HCT116 (cell line): ENCODE measurements at regions of chr17 and their contacts with region 1.

Region 1: DNA sequence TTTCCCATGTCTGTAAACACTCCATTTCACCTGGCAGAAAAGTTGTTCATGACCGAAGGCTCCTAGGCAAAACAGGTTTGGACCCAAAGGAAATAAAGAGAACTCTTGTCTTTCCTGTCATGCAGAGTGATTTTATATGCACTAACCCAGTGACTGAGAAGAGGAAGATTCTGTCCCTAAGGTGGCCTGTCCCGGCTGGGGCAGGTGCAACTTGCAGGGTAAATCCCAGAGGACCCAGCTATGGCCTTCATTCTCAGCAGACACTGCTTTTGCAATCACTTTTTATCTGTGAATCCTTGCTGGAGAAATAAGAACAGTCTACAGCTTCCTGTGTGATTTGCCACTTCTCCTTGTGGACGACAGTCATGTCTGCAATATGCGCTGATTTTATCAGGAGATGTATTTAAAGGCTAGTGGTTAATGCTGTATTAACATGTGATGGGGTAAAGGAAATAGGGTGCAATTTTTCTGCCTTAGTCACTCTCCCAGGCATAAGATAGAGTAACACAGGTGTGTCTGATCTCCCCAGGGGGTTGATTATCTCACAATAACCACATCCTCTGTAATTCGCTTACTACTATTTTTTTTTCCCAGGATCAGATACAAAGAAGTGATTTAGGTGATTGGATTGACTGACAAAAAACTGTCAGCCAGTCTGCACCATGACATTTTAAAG is 696.8 kb upstream of the SOX9 start:
- DNase-seq: peak; percentile 98
- ATAC-seq: peak; percentile 95
- H3K4me3 ChIP-seq: peak overlapping the region in 1 of 2 experiments; percentile 12; a peak in 2 of 4 replicates
- H3K27ac ChIP-seq: peak overlapping the region; percentile 60
- H3K4me1 ChIP-seq: peaks cover 19 to 28% of the 10 kb centered on the region in 2 experiments
- H3K27me3 ChIP-seq: no peaks in the 10 kb centered on the region
- CTCF ChIP-seq: peak in 2 of 3 experiments; percentile 8 to 10; a peak in 2 of 6 replicates
- POLR2A ChIP-seq: no peak
- RAD21 ChIP-seq: peak; percentile 40; the same call in 1 of the 2 replicates

Region 2: GRCh38 chr17:71402661-71403141 is 21.3 kb before region 1 on chr17:
- CTCF ChIA-PET with region 1: no interaction called
- POLR2A ChIA-PET with region 1: no interaction called
- RAD21 ChIA-PET with region 1: no interaction called
- intact Hi-C with region 1: no loop called
- DNase-seq: no peak
- ATAC-seq: peak; percentile 47; the same call in 1 of the 2 replicates
- H3K4me3 ChIP-seq: no peak overlapping the region
- H3K27ac ChIP-seq: no peak overlapping the region
- H3K4me1 ChIP-seq: peaks cover 0 to 16% of the 10 kb centered on the region in 2 experiments; a peak in 2 of 4 replicates
- H3K27me3 ChIP-seq: no peaks in the 10 kb centered on the region
- CTCF ChIP-seq: no peak
- POLR2A ChIP-seq: no peak
- RAD21 ChIP-seq: no peak

Region 3: DNA sequence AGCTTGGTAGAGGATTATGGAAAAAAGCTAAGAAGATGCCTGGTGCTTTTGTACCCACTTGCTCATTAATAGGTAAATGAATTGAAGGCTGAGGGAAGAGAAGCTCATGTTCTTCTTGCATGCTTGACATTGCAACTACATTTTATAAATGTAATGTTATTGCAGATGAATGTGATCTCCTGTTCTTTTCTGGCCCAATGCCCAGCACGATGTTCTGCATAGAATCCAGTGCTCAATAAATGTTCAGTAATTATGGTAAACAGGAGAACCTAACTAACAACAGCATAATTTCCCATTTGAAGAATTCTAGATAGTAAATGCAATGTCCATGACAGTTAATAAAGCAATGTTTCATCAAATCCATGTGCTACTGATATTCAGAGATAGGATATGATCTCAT is 58.6 kb after region 1 on chr17:
- CTCF ChIA-PET with region 1: no interaction called
- POLR2A ChIA-PET with region 1: no interaction called
- RAD21 ChIA-PET with region 1: no interaction called
- intact Hi-C with region 1: loop called (anchors 10 kb)
- DNase-seq: no peak
- ATAC-seq: no peak
- H3K4me3 ChIP-seq: no peak overlapping the region
- H3K27ac ChIP-seq: no peak overlapping the region
- H3K4me1 ChIP-seq: no peaks in the 10 kb centered on the region
- H3K27me3 ChIP-seq: no peaks in the 10 kb centered on the region
- CTCF ChIP-seq: no peak
- POLR2A ChIP-seq: no peak
- RAD21 ChIP-seq: no peak